ENCODE measurements at regions of chr1 and their contacts with region 1.

Region 1: DNA sequence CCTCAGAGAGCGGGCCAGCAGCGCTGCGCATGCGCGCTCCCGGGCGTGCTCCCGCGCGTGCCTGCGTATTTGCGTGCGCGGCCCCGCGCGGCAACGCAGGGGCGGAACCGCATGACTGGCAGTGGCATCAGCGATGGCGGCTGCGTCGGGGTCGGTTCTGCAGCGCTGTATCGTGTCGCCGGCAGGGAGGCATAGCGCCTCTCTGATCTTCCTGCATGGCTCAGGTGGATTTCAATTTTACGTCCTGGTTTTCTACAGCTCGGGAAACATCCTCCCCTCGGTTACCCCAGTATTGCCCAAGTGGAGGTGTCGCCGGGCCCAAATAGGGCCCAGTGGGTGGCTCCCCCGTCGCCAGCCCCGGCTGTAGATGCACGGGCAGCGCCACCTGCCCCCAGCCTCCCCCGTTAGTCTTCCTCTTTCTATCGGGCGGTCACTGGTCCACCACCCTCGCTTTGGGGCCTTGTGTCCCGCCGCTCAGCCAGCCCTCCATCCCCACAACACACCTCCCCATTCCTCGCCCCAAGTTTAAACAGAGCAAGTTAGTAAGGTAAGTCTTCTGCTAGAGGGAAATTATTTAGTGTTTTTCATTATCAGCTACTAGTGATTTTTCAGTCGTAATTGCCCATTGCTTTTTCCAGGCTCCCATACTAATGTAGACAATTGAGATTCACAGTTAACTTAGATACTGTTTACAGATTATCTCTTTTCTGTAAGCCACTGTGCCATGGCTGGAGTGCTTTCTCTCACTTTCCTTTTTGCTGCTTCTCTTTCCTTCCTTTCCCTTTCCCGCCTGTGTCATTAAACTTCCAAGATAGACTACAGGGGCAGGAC is at the start of gene LYPLAL1:
- DNase-seq: peak; percentile 74
- H3K4me3 ChIP-seq: peak within 1 kb of the TSS; percentile 72
- H3K27ac ChIP-seq: peak within 1 kb of the TSS; percentile 86
- H3K27me3 ChIP-seq: no peaks in the 10 kb centered on the region
- CTCF ChIP-seq: 0 out of 2 replicates have a peak, but pooled peaks have one; percentile 4
- polyA plus RNA-seq, gene LYPLAL1: 19.3 and 30.1 TPM in 2 replicates

Region 2: DNA sequence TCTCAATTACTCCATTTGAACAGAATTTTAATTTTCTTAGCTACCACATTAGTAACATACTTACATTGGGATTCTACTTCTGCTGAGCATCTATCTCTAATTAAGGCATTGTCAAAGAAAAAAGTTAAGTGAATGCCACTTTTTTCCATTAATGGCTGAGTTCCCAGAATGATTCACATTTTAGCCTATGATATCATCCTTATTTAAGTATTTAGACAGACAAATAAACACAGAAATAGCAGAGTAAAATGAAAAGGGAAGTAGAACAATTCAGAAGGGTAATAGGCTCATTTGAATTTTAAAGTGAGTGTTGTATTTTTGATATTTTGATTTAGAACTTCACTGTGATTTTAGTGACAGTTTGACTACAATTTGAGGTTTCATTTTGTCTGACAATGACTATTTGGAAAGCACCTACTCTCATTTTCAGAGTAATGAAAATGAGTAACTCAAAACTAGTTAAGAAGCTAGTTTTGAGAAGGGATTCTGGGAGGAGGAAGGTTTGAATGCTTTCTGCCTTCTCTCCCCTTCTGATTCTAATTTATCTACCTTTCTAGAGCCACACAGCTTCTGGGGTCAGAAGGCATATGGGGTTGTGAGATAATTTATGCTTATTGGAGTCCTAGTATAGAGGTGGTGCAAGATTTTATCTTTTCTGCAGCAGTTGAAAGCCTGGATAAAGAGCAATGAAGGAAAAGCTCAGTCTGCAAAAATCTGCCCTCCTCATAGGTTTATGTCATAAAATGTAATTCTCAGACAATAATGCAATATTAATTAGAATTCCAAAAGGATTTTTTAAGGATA is 15.2 kb after region 1 on chr1:
- CTCF ChIA-PET with region 1: interaction called, 11 read pairs
- POLR2A ChIA-PET with region 1: interaction called, 7 read pairs
- DNase-seq: peak; percentile 27
- H3K4me3 ChIP-seq: no peak overlapping the region
- H3K27ac ChIP-seq: no peak overlapping the region
- H3K27me3 ChIP-seq: no peaks in the 10 kb centered on the region
- CTCF ChIP-seq: no peak